Panc1 (cell line): ENCODE measurements at regions of chr15 and their contacts with region 1.

Region 1: DNA sequence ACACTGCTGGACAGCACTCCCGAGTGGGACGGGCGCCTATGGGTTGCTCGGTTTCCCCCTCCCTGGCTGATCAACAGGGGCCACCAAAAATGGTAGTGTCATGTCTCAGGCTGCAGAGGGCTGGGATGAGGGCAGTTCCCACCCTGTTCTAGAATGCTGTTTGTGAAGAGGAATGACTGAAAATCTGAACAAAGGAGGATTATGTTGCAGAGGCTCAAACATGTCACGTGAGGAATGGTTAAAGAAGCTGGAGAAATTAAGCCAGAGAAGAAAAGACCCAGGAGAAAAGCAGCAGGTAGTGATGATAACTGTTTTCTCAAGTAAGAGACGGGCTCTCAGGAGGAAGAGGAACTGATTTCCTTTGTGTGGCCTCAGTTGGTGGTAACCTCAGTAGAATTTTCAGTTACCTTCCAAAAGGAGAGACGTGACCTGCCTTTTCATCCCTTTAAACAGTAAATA is 10.4 kb downstream of the SPG21 start:
- DNase-seq: no peak
- ATAC-seq: no peak
- H3K4me3 ChIP-seq: no peak overlapping the region
- H3K27ac ChIP-seq: no peak overlapping the region
- H3K4me1 ChIP-seq: no peaks in the 10 kb centered on the region
- H3K27me3 ChIP-seq: no peaks in the 10 kb centered on the region
- CTCF ChIP-seq: no peak

Region 2: GRCh38 chr15:64780600-64781156 is 198.6 kb before region 1 on chr15:
- CTCF ChIA-PET with region 1: no interaction called
- POLR2A ChIA-PET with region 1: interaction called, 14 read pairs
- in situ Hi-C with region 1: no loop called
- intact Hi-C with region 1: no loop called
- DNase-seq: no peak
- ATAC-seq: no peak
- H3K4me3 ChIP-seq: no peak overlapping the region
- H3K27ac ChIP-seq: no peak overlapping the region
- H3K4me1 ChIP-seq: peaks cover 4% of the 10 kb centered on the region
- H3K27me3 ChIP-seq: no peaks in the 10 kb centered on the region
- CTCF ChIP-seq: no peak

Region 3: GRCh38 chr15:64825431-64826294 is 153.6 kb before region 1 on chr15 and contains the start of gene PIF1:
- CTCF ChIA-PET with region 1: no interaction called
- POLR2A ChIA-PET with region 1: interaction called, 11 read pairs
- in situ Hi-C with region 1: no loop called
- intact Hi-C with region 1: no loop called
- DNase-seq: peak; percentile 96
- ATAC-seq: peak; percentile 96
- H3K4me3 ChIP-seq: peak within 1 kb of the TSS; percentile 63 to 94
- H3K27ac ChIP-seq: peak within 1 kb of the TSS; percentile 99
- H3K4me1 ChIP-seq: peaks cover 6% of the 10 kb centered on the region; the same call in 1 of the 2 replicates
- H3K27me3 ChIP-seq: no peaks in the 10 kb centered on the region
- CTCF ChIP-seq: no peak
- total RNA-seq, gene PIF1: 38.6 TPM

Region 4: DNA sequence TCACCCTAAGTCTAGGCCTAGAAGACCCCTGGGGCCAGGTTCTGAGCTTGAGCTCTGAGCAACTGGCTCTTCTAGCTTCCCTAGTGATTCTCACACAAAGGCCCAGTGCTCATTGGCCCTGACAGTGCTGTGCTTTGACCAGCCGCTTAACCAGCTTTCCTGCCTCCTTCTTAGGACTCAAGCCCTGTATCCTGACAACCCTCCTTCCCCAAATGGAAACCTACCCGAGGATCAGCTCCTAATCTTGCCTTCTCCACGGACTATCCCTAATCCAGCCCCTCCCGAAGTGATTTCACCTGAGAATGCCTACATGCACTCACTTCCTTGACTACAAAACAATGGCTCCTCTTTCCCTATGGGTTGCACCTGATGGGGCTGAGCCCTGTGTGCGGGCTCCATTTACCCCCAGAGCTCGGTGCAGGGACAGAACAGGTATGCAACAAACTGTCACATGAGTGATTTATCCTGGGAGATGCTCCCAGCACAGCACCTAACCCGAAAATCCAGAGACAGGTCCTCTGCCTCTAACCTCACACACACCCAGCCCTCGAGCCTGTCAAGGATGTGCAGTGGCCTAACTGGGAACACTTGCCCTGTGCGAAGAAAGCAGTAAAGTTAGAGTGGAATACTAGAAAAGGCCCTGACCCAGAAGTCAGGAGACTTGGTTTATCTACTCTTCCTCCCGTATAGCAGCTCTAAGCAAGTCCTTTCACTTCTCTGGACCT is 1271.9 kb after region 1 on chr15:
- CTCF ChIA-PET with region 1: no interaction called
- POLR2A ChIA-PET with region 1: interaction called, 14 read pairs
- in situ Hi-C with region 1: no loop called
- intact Hi-C with region 1: no loop called
- DNase-seq: no peak
- ATAC-seq: no peak
- H3K4me3 ChIP-seq: no peak overlapping the region
- H3K27ac ChIP-seq: no peak overlapping the region
- H3K4me1 ChIP-seq: peaks cover 5% of the 10 kb centered on the region; the same call in 1 of the 2 replicates
- H3K27me3 ChIP-seq: peaks cover 18% of the 10 kb centered on the region
- CTCF ChIP-seq: no peak